Sciatic nerve (tissue), 2 donors: ENCODE measurements at regions of chr14 and their contacts with region 1.

Region 1: GRCh38 chr14:68520637-68521556 is 272.0 kb downstream of the ZFP36L1 start:
- DNase-seq: no peak
- ATAC-seq: no peak

Region 2: DNA sequence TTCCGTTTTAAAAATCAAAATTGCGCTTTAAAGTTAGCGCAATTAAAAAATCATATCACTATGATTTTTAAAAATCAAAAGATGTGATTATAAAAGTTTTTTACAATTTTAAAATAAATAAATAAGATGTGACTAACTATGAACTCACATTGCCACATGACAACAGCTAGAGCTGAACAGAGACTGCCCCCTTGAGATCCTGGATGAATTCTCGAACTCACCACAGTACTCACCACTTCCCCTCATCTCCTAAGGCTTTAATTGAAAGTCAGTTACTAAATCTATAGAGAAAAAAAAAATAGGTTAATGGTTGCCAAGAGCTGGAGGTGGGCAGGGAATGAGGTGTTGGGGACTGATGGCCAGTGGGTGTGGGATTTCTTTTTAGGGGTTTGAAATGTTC is 112.2 kb before region 1 on chr14:
- intact Hi-C with region 1: loop called (anchors 10 kb)
- DNase-seq: no peak
- ATAC-seq: peak; percentile 62